Vagina (tissue), 2 donors: ENCODE measurements at regions of chr16 and their contacts with region 1.

Region 1: DNA sequence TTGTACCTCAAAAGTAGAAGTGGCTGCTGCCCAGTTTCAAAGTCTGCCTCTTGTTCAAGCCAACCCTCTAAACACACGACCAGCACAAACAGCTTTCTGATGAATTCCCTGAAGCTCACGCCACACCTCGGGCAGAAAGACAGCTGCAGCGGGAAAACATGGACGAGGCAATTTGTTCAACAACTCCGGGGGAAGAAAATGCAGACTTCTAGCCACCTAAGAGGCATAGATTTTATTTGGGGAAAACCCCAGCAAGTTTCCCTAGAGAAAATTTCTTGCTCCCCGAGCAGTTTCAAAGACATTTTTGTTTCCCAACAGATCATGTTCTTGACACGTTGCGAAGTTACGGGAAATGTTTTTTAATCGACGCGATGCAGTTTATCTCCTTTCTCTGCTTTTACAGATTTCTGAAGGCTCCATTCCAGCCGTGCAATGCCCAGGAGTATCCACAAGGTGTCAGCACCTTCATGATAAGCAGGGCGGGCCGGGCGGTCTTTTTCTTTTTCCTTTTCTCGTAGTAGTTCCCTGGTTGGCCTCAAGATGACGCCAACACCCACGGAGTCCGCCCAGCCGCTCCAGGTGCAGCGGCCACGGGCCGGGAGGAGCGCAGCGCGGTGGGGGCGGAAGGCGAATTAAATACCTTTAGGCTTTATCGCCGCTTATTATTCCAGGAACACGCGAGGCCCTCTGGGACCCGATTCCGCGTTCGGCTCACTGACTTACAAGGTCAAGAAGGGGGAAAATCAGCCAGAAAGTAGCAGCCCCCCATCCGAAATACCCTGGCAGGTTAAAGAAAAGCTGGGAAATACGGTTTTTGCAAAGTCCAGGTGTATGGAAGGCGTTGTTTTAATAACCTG is 2.9 kb upstream of the FOXC2 start:
- DNase-seq: no peak
- H3K4me3 ChIP-seq: peak overlapping the region in 1 of 2 donors; percentile 28
- H3K27ac ChIP-seq: no peak overlapping the region
- H3K4me1 ChIP-seq: peaks cover 17% of the 10 kb centered on the region
- H3K27me3 ChIP-seq: peaks cover 3% of the 10 kb centered on the region
- CTCF ChIP-seq: peak; percentile 99 to 100 (median 100)
- POLR2A ChIP-seq: no peak

Region 2: DNA sequence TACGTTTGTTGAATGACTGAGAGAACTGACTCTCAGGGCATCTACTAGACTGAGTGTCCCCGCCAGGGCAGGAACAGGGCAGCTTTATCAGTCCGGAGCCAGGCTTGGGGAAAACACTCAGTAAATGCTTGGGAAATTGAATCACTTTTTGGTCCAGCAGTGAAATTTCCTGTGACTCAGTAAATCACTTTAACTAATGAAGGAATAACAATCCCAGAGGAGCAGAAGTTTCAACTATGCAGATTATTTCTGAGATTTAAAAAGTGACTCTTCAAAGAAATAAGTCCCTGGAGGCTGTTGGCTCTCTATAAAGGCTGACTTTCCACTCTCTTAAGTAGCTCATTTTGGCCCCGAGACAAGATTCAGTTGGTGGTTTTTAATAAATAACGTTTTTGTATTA is 116.4 kb after region 1 on chr16:
- intact Hi-C with region 1: loop called (anchors 5 kb)
- DNase-seq: no peak
- H3K4me3 ChIP-seq: no peak overlapping the region
- H3K27ac ChIP-seq: peak overlapping the region; percentile 40
- H3K4me1 ChIP-seq: no peaks in the 10 kb centered on the region
- H3K27me3 ChIP-seq: no peaks in the 10 kb centered on the region
- CTCF ChIP-seq: no peak
- POLR2A ChIP-seq: no peak

Region 3: GRCh38 chr16:87053016-87053982 is 489.6 kb after region 1 on chr16:
- intact Hi-C with region 1: loop called (anchors 5 kb)
- DNase-seq: no peak
- H3K4me3 ChIP-seq: no peak overlapping the region
- H3K27ac ChIP-seq: no peak overlapping the region
- H3K4me1 ChIP-seq: no peaks in the 10 kb centered on the region
- H3K27me3 ChIP-seq: no peaks in the 10 kb centered on the region
- CTCF ChIP-seq: no peak
- POLR2A ChIP-seq: no peak

Region 4: DNA sequence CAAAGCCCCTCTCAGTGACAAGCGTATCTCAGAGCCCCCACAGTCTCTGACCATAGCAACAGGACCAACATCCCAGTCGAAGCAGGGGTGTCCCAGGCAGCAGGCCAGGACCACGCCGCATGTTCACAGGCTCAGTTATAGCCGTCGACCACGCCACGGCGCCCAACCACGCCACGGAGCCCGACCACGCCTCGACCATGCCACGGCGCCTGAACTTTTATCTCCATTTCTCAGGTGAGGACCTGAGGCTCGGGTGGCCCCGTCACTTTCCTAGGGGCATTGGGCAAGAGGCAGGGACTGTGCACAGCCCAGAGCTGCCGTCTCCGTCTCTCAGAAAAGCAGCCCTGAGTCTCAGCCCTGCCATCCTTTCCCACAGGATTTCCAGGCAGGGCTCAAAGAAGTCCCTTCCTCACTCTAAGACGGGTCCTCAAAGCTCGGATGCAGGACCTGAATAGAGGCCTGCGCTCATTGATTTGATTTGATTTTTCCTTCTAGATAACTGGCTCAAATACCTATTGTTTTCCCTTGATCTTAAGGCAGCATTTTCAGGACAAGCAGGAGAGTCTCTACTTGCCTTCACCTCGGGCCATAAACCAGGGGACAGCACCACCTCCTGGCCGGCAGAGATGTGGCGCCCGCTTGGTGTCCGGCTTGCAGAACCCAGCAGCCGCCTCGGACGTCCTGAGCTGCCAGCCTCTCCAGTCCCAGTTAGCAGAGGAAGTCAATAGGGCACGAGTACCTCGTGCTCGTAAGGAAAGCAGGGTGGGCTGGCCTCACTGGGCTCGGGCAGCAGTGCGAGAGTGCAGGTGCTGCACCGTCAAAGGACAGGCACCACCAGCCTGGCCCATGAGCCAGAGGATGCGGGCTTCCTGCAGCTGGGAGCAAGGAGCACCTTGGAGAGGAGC is 714.7 kb after region 1 on chr16:
- intact Hi-C with region 1: loop called (anchors 2 kb)
- DNase-seq: no peak
- H3K4me3 ChIP-seq: no peak overlapping the region
- H3K27ac ChIP-seq: no peak overlapping the region
- H3K4me1 ChIP-seq: peaks cover 8% of the 10 kb centered on the region
- H3K27me3 ChIP-seq: no peaks in the 10 kb centered on the region
- CTCF ChIP-seq: peak; percentile 55 to 77 (median 70)
- POLR2A ChIP-seq: no peak